Breast epithelium (tissue), 4 donors: ENCODE measurements at regions of chr11 and their contacts with region 1.

Region 1: GRCh38 chr11:2584812-2585565 is 114.8 kb downstream of the KCNQ1OT1 start:
- DNase-seq: peak in 1 of 2 donors; percentile 11
- H3K4me3 ChIP-seq: no peak overlapping the region
- H3K27ac ChIP-seq: no peak overlapping the region
- H3K4me1 ChIP-seq: no peaks in the 10 kb centered on the region
- H3K27me3 ChIP-seq: no peaks in the 10 kb centered on the region
- CTCF ChIP-seq: no peak
- POLR2A ChIP-seq: no peak

Region 2: DNA sequence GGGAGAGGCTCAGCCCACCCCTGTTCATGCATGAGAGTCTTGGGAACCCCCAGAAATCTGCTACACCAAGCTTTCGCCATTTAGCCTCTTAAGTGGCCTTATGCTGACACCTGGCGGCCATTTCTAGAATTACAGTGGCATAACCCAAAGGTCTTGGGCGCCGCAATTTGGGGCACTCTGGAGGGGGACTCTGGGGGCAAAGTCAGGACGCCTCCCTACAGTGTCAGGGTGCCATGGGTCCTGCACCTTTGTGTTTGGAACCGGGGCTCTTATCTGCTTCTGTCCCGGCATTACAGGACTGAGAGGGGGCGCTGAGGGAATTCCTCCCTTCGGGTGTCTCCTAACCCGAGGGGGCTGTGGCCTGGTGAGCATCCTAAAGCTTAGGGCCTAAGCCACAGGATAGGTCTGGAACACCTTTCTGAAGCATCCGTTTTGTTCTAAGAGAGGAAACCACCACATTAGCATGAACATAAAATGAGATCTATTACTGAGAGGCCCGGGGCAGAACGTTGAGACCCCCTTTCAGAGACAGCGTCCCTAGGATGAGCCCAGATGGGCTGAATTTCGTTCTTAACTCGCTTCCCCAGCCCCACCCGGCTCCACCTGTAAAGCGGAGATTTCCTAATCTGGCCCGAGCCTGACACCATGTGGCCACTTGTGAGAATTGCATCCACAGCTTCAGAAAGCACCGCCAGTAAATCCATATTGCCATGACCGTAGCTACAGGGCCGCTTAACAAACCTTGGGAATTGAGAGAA is 433.3 kb before region 1 on chr11:
- intact Hi-C with region 1: no loop called
- DNase-seq: peak; percentile 77 to 83
- H3K4me3 ChIP-seq: no peak overlapping the region
- H3K27ac ChIP-seq: no peak overlapping the region
- H3K4me1 ChIP-seq: peaks cover 0 to 3% of the 10 kb centered on the region in 2 donors
- H3K27me3 ChIP-seq: peaks cover 0 to 59% of the 10 kb centered on the region in 2 donors
- CTCF ChIP-seq: peak; percentile 89 to 98 (median 94)
- POLR2A ChIP-seq: no peak

Region 3: DNA sequence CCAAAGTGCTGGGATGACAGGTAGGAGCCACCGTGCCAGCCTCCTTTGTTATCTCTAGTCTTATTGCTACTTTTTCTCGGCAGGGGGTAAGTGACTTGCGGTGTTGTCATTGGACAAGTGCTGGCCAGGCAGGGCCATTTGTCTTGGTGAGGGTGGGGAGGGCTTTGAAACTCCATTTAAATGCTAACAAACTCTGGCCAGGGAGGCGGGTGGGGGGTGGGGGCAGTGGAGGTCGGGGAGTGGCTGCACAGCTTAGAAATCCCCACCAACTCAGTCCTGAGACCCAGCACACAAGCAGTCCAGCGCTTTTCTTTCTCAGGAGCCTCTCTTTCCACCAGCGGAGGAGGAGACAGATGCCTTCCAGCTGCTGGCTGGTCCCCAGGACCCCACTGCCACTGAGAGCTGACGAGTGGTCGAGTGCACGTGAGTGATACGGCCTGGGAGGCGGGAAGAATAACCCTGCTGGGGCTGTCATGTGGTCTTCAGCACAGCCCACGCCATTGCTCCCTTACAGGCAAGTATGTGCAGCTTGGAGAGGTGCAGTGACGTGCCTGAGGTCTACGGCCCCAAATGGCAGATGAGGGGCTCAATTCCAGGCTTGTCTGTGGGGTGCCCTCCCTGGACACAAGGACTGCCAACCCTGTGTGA is 604.3 kb after region 1 on chr11:
- intact Hi-C with region 1: loop called (anchors 5 kb)
- DNase-seq: peak in 1 of 2 donors; percentile 43
- H3K4me3 ChIP-seq: no peak overlapping the region
- H3K27ac ChIP-seq: no peak overlapping the region
- H3K4me1 ChIP-seq: no peaks in the 10 kb centered on the region
- H3K27me3 ChIP-seq: no peaks in the 10 kb centered on the region
- CTCF ChIP-seq: no peak
- POLR2A ChIP-seq: no peak